HCT116 (cell line): ENCODE measurements at regions of chr16 and their contacts with region 1.

Region 1: DNA sequence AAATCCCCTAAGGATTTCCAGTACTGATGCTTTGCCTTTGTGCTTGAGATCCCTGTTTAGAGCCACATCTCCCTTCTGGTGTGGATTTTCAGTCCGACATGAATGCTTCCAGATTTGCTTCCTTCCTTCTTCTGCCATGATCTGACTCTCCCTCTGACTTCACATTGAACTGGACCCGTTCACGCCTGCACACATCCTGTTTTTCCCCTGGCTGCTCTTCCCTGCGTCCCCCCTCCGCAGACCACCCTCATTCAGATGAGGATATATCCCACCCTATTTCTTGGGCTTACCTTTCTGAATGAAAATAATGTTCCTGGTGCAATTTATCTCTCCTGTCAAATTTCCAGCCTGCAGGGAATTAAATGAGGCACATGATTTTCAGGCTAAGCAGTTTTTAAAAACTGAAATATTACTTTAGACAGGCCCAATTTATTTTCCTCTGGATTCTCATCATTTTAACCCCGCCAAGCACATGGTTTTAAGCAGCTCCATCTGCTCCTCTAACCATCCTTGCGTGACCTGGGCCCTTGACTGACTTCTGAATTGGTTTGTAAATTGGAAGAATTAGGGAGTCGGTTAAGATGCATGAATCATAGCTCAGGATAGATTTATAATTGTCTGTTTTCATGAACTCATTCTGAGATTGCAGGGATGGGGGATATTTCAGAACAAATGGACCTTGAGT is 59.2 kb downstream of the BMERB1 start:
- DNase-seq: no peak
- ATAC-seq: peak; percentile 26; the same call in 1 of the 2 replicates
- H3K4me3 ChIP-seq: peak overlapping the region in 1 of 2 experiments; percentile 18; a peak in 1 of 4 replicates
- H3K27ac ChIP-seq: peak overlapping the region; percentile 68
- H3K4me1 ChIP-seq: peaks cover 58 to 93% of the 10 kb centered on the region in 2 experiments
- H3K27me3 ChIP-seq: no peaks in the 10 kb centered on the region
- CTCF ChIP-seq: no peak
- POLR2A ChIP-seq: no peak
- RAD21 ChIP-seq: no peak

Region 2: DNA sequence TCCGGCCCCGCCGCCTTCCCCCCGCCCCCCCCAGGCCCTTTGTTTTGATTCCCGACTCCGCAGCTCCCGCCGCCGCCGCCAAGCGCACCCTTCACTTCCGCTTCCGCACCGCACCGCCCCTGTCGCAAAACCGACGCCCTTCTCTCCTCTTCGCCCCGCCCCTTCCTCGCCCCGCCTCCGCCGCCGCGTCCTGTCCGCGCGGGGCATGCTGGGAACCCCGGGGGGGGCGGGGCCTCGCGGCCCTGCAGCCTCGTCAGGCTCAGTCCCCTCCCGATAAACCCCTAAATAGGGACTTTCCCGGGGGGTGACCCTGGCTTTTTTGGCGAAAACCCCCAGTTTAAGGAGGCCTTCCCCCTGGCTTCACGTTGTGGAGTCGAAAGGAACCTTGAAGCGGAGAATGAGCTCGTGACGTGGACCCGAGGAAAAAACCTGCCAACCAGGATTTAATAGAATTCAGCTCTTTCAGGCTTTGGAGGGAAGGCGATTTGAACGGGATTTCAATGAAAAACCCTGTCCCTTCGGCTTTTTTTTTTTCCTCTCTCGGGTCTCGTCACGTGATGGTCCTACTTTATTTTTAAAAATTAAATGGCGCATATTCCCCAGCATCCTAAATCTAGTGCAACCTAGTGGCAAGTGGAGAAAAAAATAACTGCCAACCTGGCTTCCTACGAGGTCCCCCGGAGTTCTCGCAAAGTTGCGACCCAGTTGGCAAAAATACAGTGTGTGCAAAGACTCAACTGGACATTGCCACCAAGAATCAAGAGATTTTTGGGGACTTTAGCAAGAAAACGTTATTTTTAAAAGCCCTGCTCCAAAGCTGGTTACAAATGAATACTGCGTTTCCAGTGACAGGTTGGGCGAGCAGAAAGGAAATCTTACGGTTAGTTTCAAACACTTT is 149.7 kb after region 1 on chr16 and contains the start of gene MARF1:
- CTCF ChIA-PET with region 1: no interaction called
- POLR2A ChIA-PET with region 1: interaction called, 3 read pairs
- RAD21 ChIA-PET with region 1: no interaction called
- intact Hi-C with region 1: loop called (anchors 2 kb)
- DNase-seq: peak; percentile 87
- ATAC-seq: peak; percentile 74
- H3K4me3 ChIP-seq: peak within 1 kb of the TSS; percentile 72 to 76
- H3K27ac ChIP-seq: peak within 1 kb of the TSS; percentile 88
- H3K4me1 ChIP-seq: peaks cover 33 to 50% of the 10 kb centered on the region in 2 experiments
- H3K27me3 ChIP-seq: no peaks in the 10 kb centered on the region
- CTCF ChIP-seq: peak in 2 of 3 experiments; percentile 40 to 44; a peak in 4 of 6 replicates
- POLR2A ChIP-seq: peak; percentile 76
- RAD21 ChIP-seq: peak; percentile 27; the same call in 1 of the 2 replicates
- total RNA-seq, gene MARF1: 59.4 TPM